Posterior vena cava (tissue), 2 donors: ENCODE measurements at regions of chr2 and their contacts with region 1.

Region 1: DNA sequence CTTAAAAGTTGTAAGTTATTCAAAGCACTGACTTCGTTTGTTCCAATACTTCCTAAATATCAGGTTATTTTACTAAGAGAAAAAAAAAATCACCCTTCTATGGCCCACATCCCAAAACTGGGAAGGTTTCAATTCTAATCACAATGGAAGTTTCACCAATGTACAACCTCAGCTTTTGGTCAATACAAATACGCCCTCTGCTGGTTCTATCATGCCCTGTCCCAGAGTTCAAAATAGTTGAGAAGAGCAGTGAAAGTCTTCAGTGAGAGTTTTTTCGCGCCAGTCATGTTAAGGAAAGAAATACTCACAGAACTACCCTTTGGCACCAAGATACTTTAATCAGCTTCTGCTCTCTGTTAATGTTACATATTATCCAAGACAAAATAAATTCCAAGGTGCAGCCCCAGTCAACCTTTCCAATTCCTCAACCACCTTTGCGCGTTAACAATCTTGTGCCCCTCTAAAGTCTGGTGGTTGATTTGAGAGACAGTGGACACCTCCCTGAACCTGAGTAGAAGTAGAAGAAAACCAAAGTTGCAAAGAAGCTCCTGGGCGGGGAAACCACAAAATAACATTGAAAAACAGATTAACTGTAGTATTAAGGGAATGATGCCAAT is 59.9 kb downstream of the SUMO1 start:
- DNase-seq: no peak

Region 2: GRCh38 chr2:201795607-201796477 is 382.6 kb before region 1 on chr2:
- intact Hi-C with region 1: loop called in 1 of 2 experiments (anchors 5 kb)
- DNase-seq: no peak

Region 3: GRCh38 chr2:202034249-202035088 is 144.0 kb before region 1 on chr2:
- intact Hi-C with region 1: loop called in 1 of 2 experiments (anchors 5 kb)
- DNase-seq: no peak

Region 4: GRCh38 chr2:202221873-202222272 is 43.4 kb after region 1 on chr2:
- intact Hi-C with region 1: no loop called
- DNase-seq: no peak